Colonic mucosa (tissue), 4 donors: ENCODE measurements at regions of chr1 and their contacts with region 1.

Region 1: DNA sequence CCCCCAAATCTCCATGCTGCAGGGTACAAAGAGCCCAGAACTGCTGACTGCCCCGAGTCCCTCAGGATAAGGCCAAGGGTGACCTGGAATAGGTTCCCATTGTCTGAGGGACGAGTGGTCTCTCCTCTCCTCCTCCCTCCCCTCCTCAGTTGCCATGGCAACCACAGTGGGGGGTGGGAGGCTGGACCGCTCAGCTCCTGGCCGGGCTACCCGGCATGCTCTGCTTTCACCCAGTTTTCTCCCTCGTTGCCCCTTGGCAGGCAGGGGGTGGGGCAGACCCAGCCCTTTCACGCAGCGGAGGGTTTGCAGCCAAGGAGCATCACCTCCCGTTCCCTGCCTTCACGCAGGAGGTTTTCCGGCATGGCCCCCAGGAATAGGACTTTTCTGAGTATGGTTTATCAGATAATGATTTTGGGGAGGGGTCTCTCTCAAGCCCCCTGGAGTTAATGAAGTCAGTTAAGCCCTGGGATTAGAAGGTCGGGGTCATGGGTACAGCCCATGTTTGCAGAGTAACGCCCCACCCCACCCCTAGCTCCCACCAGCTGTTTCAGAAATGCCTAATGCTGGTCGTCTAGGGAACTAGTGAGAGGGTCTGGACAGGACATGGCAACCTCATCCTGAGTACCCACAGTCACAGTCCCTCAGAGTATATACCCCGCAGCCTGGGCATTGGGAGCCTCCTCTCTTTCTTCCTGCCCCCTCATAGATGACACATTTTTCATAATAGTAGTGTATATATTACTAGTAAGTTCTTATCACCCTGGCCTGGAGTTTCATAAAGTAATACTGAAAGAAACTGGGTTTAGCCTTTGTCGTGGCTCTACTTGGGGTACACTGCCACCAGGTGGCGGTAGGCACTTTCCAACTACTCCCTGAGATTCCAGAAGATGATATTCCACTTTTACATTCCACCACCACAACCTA is 20.7 kb downstream of the C1QB start:
- DNase-seq: peak; percentile 84
- H3K4me3 ChIP-seq: no peak overlapping the region
- H3K27ac ChIP-seq: no peak overlapping the region
- H3K4me1 ChIP-seq: peaks cover 6% of the 10 kb centered on the region
- H3K27me3 ChIP-seq: no peaks in the 10 kb centered on the region
- CTCF ChIP-seq: peak; percentile 77

Region 2: GRCh38 chr1:22739648-22740385 is 66.1 kb after region 1 on chr1:
- intact Hi-C with region 1: no loop called
- DNase-seq: no peak
- H3K4me3 ChIP-seq: no peak overlapping the region
- H3K27ac ChIP-seq: no peak overlapping the region
- H3K4me1 ChIP-seq: no peaks in the 10 kb centered on the region
- H3K27me3 ChIP-seq: no peaks in the 10 kb centered on the region
- CTCF ChIP-seq: no peak

Region 3: DNA sequence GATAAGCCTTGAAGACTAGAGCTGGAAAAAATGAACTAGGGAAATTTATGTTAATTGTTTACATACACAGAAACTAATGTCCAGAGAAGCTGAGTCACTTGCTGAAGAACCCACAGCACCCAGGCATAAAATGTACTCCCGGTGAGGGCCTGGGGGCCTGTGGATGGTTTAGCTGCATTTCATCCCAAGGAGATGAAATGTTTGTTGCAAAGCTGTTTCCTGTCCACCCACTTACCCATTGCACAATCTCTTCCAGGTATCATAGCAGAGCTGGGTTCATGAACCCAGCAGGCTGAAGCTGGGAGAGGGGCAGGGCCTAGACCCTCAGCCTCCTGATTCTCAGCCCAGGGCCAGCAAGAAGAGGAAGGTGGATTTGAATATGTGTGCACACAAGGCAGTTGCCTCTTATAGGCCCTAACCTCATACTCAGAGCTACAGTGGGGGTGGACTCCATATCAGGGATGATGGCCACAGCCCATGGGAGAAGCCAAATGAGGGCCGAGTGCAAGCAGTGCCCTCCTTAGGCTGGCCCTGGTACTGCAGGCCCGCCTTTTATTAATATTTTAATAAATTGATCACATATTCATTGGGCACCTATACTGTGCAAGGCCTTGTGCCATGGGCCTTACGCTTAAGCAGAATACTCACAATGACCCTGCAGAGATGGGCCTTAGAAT is 188.2 kb after region 1 on chr1:
- intact Hi-C with region 1: loop called (anchors 10 kb)
- DNase-seq: peak; percentile 30
- H3K4me3 ChIP-seq: no peak overlapping the region
- H3K27ac ChIP-seq: no peak overlapping the region
- H3K4me1 ChIP-seq: no peaks in the 10 kb centered on the region
- H3K27me3 ChIP-seq: no peaks in the 10 kb centered on the region
- CTCF ChIP-seq: peak; percentile 76

Region 4: GRCh38 chr1:22930235-22930912 is 256.6 kb after region 1 on chr1:
- intact Hi-C with region 1: loop called (anchors 2 kb)
- DNase-seq: peak; percentile 52
- H3K4me3 ChIP-seq: no peak overlapping the region
- H3K27ac ChIP-seq: no peak overlapping the region
- H3K4me1 ChIP-seq: no peaks in the 10 kb centered on the region
- H3K27me3 ChIP-seq: no peaks in the 10 kb centered on the region
- CTCF ChIP-seq: peak; percentile 52